Posterior cingulate gyrus (tissue), 11 donors: ENCODE measurements at regions of chr5 and their contacts with region 1.

Region 1: GRCh38 chr5:902129-902916 is 9.6 kb downstream of the TRIP13 start:
- DNase-seq: peak in 1 of 10 donors; percentile 39

Region 2: DNA sequence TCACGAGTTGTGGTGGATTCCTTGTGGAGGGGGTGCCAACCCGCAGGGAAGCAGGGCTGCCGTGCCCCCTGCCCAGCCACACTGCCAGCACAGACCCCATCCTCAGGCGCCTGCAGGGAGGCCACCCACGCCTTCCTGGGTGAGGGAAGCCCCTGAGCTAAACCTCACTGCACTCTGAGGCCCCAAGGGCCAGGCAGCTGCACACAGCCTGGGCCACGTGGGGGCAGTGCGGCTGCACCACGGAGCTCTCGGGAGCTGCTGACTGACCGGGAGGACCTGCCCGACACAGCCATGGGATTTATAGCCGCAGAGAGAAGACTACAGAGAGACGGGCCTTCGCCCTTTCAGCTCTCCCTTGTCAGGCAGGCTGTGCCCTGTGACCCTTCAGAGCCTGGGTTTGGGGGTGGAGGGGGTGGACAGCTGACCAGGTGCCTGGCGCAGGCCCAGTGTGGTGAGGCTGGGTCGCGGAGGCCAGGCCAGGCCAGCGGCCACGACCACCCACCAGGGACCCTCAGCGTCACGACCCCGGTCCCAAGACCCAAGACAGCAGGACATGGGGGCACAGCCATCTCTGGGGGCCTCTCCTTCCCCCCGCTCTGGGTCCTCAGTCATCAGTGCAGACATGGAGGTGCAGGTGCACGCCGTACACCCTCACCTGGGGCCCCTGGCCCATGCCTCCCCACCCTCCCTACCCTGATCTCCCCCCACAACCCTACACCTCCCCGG is 585.1 kb before region 1 on chr5:
- intact Hi-C with region 1: loop called (anchors 10 kb)
- DNase-seq: peak in 8 of 10 donors; percentile 45 to 95 (median 64)

Region 3: DNA sequence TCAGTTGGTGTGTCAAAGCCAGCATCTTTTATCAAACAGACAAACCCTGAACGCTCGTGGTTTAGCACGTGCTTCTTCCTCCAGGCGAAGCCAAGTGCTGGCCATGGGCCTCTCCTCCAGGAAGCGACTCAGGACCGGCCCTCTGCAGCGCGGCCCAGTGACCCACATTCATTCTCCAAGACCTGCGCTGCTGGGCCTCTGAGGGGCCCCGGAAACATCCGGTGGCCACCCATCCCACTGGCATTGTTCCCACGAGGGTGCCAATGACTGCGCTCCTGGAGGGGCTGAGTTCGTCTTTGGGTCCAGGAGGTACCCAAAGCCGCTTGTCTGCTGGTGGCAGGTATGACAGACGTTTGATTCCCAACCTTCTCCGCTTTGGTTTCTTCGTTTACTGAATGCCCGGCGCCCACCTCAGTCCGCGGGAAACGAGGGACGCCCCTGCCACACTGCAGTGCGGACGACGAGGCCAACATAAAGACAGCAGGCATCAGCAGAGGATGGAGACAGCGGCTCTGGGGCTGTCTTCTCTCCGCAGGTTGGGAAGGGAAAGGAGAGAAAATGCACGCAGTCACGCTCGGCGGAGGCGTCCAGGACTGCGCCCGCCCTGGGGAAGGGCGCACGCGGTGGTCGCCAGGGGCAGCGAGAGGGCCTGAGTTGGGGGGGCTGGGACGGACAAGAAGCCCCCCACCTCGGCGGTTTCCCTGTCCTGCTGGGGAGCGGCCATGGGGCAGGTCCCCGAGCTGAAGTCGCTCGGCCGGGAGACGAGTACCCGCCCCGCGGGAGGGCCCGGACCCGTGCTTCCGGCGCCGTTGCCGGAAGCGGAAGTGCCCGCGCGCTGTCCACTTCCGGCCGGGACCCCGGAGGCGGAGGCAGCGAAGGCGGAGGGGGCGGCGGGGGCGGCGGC is 459.7 kb before region 1 on chr5 and contains the start of gene EXOC3:
- intact Hi-C with region 1: loop called (anchors 5 kb)
- DNase-seq: peak; percentile 61 to 97 (median 77)

Region 4: DNA sequence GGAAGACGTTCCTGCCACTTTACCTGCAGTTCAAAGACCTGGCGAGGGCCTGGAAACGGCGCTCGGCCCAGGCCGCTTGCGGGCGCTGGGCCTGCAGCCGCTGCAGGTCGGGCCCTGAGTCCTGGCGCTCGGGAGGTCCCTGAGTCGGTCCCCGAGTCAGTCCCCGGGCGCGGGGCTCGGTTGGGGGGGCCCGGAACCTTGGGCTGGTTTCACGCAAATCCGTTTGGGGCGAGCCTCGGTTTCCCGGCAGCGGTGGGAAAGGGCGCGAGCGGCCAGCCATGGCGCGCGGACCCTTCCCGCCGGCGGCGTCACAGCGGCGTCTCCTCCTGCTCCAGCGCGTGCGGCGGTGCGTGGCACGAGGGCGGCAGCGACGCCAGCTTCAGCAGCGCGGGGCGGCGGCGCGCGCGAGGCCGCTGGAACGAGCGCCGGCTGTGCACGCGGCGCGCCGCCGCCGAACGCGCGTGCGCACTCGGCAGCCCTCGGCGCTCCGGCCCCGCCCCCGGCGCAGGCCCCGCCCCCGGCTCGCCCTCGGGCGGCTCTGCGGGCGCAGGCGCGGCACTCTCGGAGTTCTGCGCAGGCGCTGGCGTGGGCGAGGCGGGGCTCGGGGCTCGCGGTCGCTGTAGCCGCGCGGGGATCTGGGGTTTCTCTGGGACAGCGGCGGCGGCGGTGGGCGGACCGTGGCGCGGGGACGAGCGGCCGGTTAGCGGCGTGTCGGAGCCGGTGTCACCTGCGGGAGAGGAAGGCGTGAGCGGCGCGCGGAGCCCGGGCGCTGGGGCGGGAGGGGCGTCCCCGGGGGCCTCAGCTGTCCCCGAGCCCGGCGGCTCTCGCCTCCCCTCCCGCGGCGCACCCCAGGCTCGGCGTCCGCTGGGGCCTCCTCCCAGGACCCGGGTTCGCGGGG is 429.4 kb before region 1 on chr5:
- intact Hi-C with region 1: loop called (anchors 10 kb)
- DNase-seq: peak; percentile 67 to 98 (median 84)